ENCODE measurements at regions of chr3 and their contacts with region 1.

Region 1: DNA sequence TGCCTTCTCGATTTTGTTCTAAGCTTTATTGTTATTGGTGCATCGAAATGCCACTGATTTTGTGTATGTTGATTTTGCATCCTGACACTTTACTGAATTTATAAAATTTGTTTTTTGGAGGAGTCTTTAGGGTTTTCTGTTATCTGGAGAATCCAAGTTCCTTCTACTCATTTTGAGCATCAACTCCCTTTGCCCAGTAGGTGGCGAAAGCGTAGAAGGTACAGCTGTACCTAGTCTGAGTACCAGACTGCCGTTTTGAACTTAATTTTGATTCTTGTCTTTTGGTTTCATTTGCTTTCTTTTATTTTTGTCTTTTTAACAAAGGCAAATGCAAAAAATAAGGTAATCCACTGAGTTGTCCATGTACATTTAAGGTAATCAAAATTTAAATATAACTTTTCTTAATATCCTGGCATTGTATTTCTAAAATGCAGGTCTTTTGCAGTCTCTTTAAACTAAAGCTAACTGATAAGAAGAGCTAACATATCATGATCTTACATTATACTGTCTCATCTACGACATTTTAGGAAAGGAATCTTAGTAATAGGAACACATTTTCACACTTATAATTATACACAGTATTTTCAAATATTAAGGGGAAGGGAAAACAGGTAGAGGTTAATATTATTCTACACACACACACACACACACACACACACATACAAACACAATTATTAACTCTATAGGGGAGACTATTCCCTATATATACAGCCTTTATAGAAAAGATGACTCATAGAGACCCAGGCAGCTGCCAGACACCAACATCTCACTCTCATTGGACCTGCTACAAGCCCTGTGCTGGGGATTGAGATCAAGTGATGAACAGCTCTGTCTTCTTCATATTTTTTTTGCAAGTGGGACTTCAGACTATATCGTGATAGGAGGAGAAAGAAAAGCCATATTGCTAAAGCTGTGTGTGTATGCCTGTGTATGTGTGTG is 71.7 kb downstream of the SYNPR start:
- DNase-seq: no peak
- H3K4me3 ChIP-seq: no peak overlapping the region
- CTCF ChIP-seq: peak; percentile 74

Region 2: DNA sequence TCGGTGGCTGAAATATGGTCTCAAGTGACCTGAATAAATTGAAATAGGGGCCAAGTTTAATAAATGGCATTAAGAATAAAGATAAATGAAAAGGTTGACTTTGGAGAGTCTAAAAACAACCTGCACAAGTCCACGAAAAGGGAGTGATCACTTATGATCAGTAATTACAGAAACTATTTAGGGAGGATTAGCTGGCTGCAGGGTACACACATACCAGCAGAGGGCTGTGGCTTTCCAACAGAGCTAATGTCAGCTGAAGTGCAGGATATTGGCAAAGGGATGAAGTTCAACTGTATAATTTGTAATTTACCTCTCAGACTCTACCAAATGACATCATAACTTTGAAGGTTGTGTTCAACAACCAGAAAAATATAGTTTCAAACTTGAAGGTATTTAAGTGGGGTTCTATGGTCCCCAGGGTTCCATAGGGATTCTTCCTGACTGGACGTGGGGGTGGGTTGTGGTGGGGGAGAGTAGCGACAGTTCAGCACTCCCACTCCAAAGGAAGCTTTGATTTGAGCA is 15.1 kb after region 1 on chr3:
- CTCF ChIA-PET with region 1: interaction called, 27 read pairs
- POLR2A ChIA-PET with region 1: no interaction called
- DNase-seq: no peak
- H3K4me3 ChIP-seq: no peak overlapping the region
- CTCF ChIP-seq: no peak

Region 3: GRCh38 chr3:63724987-63725386 is 375.1 kb after region 1 on chr3:
- CTCF ChIA-PET with region 1: interaction called, 17 read pairs
- POLR2A ChIA-PET with region 1: no interaction called
- DNase-seq: peak; percentile 85
- H3K4me3 ChIP-seq: no peak overlapping the region
- CTCF ChIP-seq: no peak

Region 4: GRCh38 chr3:63809607-63810006 is 459.8 kb after region 1 on chr3:
- CTCF ChIA-PET with region 1: interaction called, 491 read pairs
- POLR2A ChIA-PET with region 1: no interaction called
- DNase-seq: no peak
- H3K4me3 ChIP-seq: no peak overlapping the region
- CTCF ChIP-seq: no peak

Region 5: DNA sequence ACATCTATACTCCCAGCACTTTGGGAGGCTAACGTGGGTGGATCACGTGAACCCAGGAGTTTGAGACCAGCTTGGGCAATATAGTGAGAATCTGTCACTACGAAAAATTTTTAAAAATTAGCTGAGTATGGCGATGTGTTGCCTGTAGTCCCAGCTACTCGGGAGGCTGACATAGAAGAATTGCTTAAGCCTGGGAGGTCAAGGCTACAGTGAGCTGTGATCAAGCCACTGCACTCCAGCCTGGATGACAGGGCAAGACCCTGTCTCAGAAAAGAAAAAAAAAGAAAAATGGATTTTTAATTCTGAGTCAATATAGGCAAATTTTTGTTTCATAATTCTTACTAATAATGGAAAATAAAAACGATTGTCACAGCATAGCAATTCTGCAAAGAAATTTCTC is 482.5 kb after region 1 on chr3:
- CTCF ChIA-PET with region 1: interaction called, 12 read pairs
- POLR2A ChIA-PET with region 1: no interaction called
- DNase-seq: no peak
- H3K4me3 ChIP-seq: no peak overlapping the region
- CTCF ChIP-seq: no peak